GM10248 (cell line): ENCODE measurements at regions of chr3 and their contacts with region 1.

Region 1: GRCh38 chr3:122233101-122233952 is 49.9 kb downstream of the CASR start:
- DNase-seq: peak; percentile 46
- CTCF ChIP-seq: no peak

Region 2: GRCh38 chr3:122245513-122246174 is 12.3 kb after region 1 on chr3:
- CTCF ChIA-PET with region 1: interaction called, 15 read pairs
- POLR2A ChIA-PET with region 1: no interaction called
- DNase-seq: no peak
- CTCF ChIP-seq: peak; percentile 7

Region 3: DNA sequence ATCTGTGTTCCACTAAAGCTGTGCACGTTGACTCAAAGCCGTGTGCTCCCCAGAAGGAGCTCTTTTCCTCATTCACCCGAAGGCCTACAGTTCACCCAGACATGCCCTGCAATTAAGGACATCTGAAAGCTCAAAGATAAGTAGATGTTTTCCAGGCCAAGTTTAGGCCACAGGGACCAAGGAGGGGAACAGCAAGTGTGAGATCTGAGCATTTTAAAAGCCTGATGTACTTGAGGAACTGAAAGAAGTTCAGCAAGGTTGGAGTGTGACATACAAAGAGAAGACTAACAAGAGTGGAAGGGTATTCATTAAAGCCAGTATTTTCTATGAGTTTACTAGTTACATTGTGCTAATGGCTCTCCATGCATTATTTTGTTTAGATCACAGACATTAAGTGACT is 18.1 kb after region 1 on chr3:
- CTCF ChIA-PET with region 1: interaction called, 15 read pairs
- POLR2A ChIA-PET with region 1: interaction called, 3 read pairs
- DNase-seq: peak; percentile 30
- CTCF ChIP-seq: no peak